ENCODE measurements at regions of chr2 and their contacts with region 1.

Region 1: GRCh38 chr2:43131024-43131889 is 95.1 kb downstream of the ZFP36L2 start:
- DNase-seq: peak; percentile 79
- H3K4me3 Mint-ChIP-seq: peak overlapping the region; percentile 65
- H3K27ac Mint-ChIP-seq: peak overlapping the region; percentile 67
- H3K4me1 Mint-ChIP-seq: peaks cover 78% of the 10 kb centered on the region
- H3K27me3 Mint-ChIP-seq: no peaks in the 10 kb centered on the region

Region 2: DNA sequence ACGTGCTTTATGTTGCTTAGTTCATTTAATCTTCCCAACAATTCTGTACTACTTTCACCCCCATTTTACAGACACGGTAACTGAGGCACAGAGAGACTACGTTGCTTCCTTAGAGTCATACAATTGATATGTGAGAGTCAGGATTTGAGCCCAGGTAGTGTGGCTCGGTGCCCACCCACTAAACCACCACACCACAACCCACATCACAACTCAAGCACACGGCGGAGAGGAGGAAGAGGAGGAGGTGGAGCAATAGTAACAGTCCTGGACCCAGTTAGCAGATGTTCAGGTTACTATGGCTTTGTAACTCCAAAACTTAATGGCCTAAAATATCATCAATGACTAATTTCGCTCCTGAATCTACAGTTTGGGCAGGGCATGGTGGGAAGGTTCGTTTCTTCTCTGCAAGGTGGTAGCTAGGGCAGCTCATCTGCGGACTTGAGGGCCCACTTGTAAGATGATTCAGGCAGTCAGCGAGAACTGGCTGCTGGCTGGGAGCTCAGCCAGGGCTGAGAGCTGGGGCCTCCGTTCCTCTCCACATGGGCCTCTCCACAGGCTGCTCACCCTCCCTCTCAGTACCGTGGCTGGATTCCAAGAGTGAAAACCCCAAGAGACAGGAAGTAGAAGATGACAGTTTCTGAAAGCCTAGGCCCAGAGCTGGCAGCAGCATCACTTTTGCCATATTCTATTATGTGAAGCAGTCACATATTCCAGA is 71.9 kb before region 1 on chr2:
- intact Hi-C with region 1: loop called (anchors 5 kb)
- DNase-seq: peak; percentile 39
- H3K4me3 Mint-ChIP-seq: peak overlapping the region; percentile 19
- H3K27ac Mint-ChIP-seq: peak overlapping the region; percentile 80
- H3K4me1 Mint-ChIP-seq: peaks cover 19% of the 10 kb centered on the region
- H3K27me3 Mint-ChIP-seq: peaks cover 2% of the 10 kb centered on the region

Region 3: DNA sequence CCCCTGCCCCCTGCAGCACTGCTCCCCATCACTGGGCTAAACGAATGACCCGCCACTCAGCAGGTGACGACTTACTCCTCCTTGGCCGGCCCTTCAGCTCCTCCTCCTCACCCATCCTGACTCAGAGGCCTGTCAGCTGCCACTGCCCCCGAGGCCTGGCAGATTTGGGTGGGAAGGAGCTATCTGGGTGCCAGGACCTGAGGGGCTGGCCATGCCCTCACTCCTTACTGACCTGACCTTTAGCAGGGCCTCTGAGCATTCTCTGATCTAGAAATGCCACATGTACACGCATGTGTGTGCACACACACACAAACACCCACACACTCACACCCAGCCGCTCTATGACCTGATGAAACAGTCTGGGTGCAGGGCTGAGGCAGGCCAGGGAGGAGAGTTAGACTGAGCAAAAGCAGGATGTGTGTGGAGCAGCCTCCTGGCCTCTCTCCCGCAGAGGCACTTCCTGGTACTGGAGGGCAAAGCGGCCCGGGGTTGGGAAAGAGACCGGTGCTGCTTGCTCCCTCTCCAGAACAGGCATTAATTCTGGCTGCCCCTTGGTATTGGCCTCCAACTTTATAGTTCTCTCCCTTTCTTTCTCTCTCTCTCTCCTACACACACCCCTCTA is 27.1 kb after region 1 on chr2:
- intact Hi-C with region 1: loop called (anchors 1 kb)
- DNase-seq: peak; percentile 58
- H3K4me3 Mint-ChIP-seq: peak overlapping the region; percentile 74
- H3K27ac Mint-ChIP-seq: peak overlapping the region; percentile 99
- H3K4me1 Mint-ChIP-seq: peaks cover 39% of the 10 kb centered on the region
- H3K27me3 Mint-ChIP-seq: no peaks in the 10 kb centered on the region

Region 4: GRCh38 chr2:43219383-43220228 is 88.3 kb after region 1 on chr2:
- intact Hi-C with region 1: loop called (anchors 1 kb)
- DNase-seq: peak; percentile 82
- H3K4me3 Mint-ChIP-seq: peak overlapping the region; percentile 82
- H3K27ac Mint-ChIP-seq: peak overlapping the region; percentile 94
- H3K4me1 Mint-ChIP-seq: peaks cover 35% of the 10 kb centered on the region
- H3K27me3 Mint-ChIP-seq: no peaks in the 10 kb centered on the region

Region 5: DNA sequence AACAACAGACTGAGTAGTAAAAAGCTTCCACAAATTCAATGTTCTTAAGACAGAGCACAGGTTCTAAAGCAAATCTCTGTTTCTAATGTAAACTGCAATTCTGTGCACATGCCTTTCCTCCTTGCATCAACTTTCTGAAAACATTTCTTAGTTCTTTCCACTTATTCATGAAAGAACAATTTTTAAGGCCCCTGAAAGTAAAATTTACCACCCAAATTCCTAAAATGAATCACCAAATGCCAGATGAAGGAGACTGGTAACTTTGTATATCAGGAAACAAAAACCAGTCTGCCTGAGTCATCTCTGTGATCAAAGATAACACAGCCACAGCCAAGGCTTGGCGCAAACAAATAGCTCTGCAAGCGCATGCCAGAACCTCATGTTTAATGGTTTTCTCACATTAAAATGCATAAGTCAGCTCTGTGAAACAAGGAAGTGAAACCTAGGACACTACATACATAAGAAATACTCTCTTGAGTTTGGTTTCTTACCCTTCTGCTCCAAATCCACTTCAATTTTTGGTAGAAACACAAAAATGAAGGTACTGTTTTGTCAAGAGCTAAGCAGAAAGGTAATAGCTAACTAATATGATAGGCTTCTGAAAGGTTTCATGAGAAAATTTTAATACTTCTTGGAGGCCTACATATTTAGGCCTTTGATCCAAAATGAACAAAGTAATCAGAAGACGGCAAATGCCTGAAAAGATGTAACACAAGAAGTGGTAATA is 295.2 kb after region 1 on chr2:
- intact Hi-C with region 1: loop called (anchors 1 kb)
- DNase-seq: peak; percentile 80
- H3K4me3 Mint-ChIP-seq: no peak overlapping the region
- H3K27ac Mint-ChIP-seq: peak overlapping the region; percentile 19
- H3K4me1 Mint-ChIP-seq: peaks cover 38% of the 10 kb centered on the region
- H3K27me3 Mint-ChIP-seq: no peaks in the 10 kb centered on the region

Region 6: DNA sequence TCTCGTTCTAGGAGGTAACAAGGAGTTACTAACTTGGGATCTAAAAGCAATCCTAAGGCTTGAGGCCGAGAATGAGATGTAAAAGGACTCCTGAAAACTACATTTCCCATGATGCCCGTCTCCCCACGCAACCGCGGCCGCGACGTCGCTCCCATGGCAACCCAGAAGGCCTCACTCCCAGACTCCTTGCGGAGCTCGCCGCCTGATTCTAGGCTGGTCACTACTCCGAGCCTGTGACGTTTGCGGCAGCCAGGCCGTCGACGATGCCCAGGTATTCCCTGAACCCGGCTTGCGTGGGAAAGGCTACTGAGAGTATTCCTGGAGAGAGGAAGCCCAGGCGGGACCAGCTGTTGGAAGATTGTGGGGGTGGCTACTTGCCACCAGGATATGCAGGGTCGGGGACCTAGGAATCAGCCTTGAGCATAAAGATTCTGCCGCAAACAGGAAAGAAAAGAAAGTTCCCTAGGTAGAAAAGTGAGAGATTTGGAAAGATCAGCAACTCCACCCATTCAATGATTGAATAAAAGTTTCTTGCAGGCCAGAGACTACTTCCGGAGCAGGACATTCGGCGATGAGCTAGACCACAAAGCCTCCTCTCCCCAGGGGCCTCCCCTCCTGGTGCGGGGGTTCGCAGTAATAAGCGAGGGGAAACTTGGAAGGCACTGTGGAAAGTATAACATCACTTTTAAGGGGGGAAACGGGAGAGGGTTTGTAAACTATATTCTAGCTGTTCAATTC is 642.8 kb after region 1 on chr2 and contains the start of gene DYNC2LI1:
- intact Hi-C with region 1: loop called (anchors 10 kb)
- DNase-seq: peak; percentile 74
- H3K4me3 Mint-ChIP-seq: peak within 1 kb of the TSS; percentile 86
- H3K27ac Mint-ChIP-seq: peak within 1 kb of the TSS; percentile 95
- H3K4me1 Mint-ChIP-seq: peaks cover 31% of the 10 kb centered on the region
- H3K27me3 Mint-ChIP-seq: no peaks in the 10 kb centered on the region
- total RNA-seq, gene DYNC2LI1: 67.7 and 71.6 TPM in 2 replicates

Measured in activated T-helper 2 cell treated with anti-CD3 and anti-CD28 coated beads, Interferon-gamma antibody, Interleukin-2, Interleukin-4, amounts not matched to agents 10 μg/mL and 5 μg/mL and 100 μg/mL, durations not matched to agents 14 hours and 24 hours and 36 hours (primary cell).